ENCODE measurements at regions of chr1 and their contacts with region 1.

Region 1: DNA sequence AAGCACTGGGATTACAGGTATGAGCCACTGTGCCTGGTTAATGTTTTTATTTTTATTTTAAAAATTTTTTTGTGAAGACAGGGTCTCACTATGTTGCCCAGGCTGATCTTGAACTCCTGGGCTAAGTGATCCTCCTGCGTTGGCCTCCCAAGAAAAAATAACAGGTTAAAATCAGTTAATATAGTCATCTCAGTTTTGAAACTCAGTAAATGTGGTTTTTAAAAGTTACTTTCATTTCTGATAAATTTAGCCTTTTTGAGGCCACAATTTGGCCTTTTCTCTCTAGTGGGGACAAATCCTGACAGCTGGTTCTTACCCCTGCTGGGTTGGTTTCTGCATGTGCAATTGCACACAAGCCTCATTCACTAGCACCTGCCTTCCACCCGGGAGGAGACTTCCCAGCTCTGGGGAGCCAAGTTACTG is 13.3 kb downstream of the PMF1 start:
- DNase-seq: no peak
- H3K4me3 ChIP-seq: no peak overlapping the region
- H3K27ac ChIP-seq: no peak overlapping the region
- H3K4me1 ChIP-seq: peaks cover 12% of the 10 kb centered on the region
- H3K27me3 ChIP-seq: no peaks in the 10 kb centered on the region
- CTCF ChIP-seq: no peak

Region 2: GRCh38 chr1:156090822-156091188 is 135.3 kb before region 1 on chr1:
- CTCF ChIA-PET with region 1: interaction called, 6 read pairs
- dilution Hi-C with region 1: no loop called
- in situ Hi-C with region 1: loop called (anchors 5 kb)
- intact Hi-C with region 1: loop called (anchors 1 kb)
- DNase-seq: peak; percentile 71
- H3K4me3 ChIP-seq: no peak overlapping the region
- H3K27ac ChIP-seq: no peak overlapping the region
- H3K4me1 ChIP-seq: peaks cover 4% of the 10 kb centered on the region
- H3K27me3 ChIP-seq: no peaks in the 10 kb centered on the region
- CTCF ChIP-seq: peak; percentile 57 to 81

Region 3: DNA sequence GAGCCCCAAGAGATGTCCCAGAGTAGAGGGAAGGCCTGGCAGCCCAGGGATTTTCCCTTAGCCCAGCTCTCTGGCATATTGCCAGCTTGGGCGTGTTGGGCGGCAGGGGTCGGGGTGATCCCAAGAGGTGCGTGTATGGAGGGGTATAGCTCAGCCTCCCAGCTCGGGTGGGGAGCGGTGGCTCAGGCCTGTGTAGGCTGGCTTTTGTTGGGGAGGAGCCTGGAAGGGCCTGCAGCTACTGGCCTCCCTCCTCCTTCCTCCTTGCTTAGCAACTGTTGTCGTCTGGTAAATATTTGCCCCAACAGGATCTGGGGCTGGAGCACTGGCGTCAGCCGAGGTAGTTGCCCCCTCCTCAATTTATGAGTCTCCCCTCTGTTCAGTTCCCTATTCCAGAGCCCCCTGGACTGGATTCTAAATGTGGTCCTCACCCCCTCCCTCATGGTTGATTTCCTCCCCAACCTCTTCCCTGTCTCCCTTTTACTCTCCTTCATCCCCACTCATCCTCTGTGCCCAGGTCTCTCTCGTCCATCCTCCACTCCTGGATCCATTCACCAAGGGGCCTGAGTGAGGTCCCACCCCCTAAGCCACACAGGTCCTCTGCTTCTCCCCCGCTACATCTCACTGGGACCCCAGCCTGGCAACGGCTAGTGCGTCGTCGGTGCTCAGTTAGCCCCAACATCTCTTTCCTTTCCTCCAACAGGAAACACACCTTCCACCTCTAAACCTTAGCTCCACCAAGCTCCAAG is 121.9 kb before region 1 on chr1:
- CTCF ChIA-PET with region 1: interaction called, 18 read pairs
- dilution Hi-C with region 1: loop called (anchors 5 kb)
- in situ Hi-C with region 1: no loop called
- intact Hi-C with region 1: no loop called
- DNase-seq: peak; percentile 90
- H3K4me3 ChIP-seq: peak overlapping the region in 1 of 3 experiments; percentile 2
- H3K27ac ChIP-seq: peak overlapping the region; percentile 91
- H3K4me1 ChIP-seq: peaks cover 48% of the 10 kb centered on the region
- H3K27me3 ChIP-seq: no peaks in the 10 kb centered on the region
- CTCF ChIP-seq: no peak

Region 4: DNA sequence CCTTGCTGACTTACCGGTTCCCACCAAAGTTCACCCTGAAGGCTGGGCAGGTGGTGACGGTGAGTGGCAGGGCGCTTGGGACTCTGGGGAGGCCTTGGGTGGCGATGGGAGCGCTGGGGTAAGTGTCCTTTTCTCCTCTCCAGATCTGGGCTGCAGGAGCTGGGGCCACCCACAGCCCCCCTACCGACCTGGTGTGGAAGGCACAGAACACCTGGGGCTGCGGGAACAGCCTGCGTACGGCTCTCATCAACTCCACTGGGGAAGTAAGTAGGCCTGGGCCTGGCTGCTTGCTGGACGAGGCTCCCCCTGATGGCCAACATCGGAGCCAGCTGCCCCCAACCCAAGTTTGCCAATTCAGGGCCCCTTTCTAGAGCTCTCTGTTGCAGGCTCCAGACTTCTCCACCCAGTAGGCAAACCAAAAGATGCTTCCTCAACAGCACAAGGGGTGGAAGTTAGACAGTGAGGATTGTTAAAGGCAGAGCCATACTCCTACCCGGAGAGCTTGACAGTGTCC is 89.1 kb before region 1 on chr1:
- CTCF ChIA-PET with region 1: no interaction called
- dilution Hi-C with region 1: loop called (anchors 5 kb)
- in situ Hi-C with region 1: loop called in 1 of 2 experiments (anchors 5 kb)
- intact Hi-C with region 1: loop called (anchors 5 kb)
- DNase-seq: no peak
- H3K4me3 ChIP-seq: no peak overlapping the region
- H3K27ac ChIP-seq: no peak overlapping the region
- H3K4me1 ChIP-seq: no peaks in the 10 kb centered on the region
- H3K27me3 ChIP-seq: no peaks in the 10 kb centered on the region
- CTCF ChIP-seq: peak in 1 of 2 donors; percentile 6

Region 5: DNA sequence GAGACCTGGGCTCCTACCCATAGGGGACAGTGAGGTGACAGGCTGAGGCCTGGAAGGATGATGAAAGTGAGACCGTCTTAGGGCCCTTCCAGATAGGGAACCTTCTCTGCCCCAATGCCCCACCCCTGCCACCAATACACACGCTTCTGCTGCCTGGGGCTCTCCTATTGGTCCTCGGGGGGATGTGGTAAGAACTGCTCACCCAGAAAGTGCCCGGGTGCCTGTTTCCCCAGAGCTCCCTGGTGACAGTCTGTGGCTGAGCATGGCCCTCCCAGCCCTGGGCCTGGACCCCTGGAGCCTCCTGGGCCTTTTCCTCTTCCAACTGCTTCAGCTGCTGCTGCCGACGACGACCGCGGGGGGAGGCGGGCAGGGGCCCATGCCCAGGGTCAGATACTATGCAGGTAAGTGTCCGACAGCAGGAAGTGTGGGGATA is 71.8 kb before region 1 on chr1:
- CTCF ChIA-PET with region 1: interaction called, 3 read pairs
- dilution Hi-C with region 1: no loop called
- in situ Hi-C with region 1: loop called in 1 of 2 experiments (anchors 10 kb)
- intact Hi-C with region 1: no loop called
- DNase-seq: no peak
- H3K4me3 ChIP-seq: no peak overlapping the region
- H3K27ac ChIP-seq: no peak overlapping the region
- H3K4me1 ChIP-seq: peaks cover 20% of the 10 kb centered on the region
- H3K27me3 ChIP-seq: no peaks in the 10 kb centered on the region
- CTCF ChIP-seq: no peak

Region 6: DNA sequence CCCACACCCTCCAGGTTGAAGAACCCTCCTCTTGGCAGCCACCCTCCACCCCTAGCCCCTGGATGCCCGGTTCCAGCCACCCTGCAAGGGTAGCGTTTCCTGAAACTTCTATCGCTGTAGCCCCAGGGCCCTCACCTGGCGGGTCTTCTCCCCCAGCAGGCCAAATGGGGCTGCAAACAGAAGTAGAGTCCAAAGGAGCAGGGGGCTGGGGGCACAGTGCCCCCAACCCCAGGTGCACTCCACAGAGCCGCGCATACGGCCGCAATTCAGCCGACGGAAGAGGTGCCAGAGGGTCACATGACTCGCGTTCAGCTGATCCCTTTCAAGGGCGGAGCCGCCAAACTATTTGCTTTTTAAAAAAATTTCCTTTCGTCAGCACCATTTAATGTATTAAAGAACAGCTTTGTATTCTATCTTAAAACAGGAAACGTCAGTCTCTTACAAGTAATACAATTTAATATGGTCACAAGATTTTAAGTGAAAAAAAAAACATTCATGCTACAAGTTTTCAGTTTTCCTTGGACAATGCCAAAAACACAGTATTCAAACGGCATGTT is 69.3 kb after region 1 on chr1 and contains the start of gene GLMP:
- CTCF ChIA-PET with region 1: no interaction called
- dilution Hi-C with region 1: loop called (anchors 5 kb)
- in situ Hi-C with region 1: no loop called
- intact Hi-C with region 1: no loop called
- DNase-seq: peak; percentile 36
- H3K4me3 ChIP-seq: peak within 1 kb of the TSS; percentile 50 to 89 (median 53)
- H3K27ac ChIP-seq: no peak within 1 kb of the TSS
- H3K4me1 ChIP-seq: peaks cover 16% of the 10 kb centered on the region
- H3K27me3 ChIP-seq: no peaks in the 10 kb centered on the region
- CTCF ChIP-seq: no peak
- total RNA-seq, gene GLMP: 29.7 to 32.1 TPM